Left colon (tissue), 2 donors: ENCODE measurements at regions of chr1 and their contacts with region 1.

Region 1: DNA sequence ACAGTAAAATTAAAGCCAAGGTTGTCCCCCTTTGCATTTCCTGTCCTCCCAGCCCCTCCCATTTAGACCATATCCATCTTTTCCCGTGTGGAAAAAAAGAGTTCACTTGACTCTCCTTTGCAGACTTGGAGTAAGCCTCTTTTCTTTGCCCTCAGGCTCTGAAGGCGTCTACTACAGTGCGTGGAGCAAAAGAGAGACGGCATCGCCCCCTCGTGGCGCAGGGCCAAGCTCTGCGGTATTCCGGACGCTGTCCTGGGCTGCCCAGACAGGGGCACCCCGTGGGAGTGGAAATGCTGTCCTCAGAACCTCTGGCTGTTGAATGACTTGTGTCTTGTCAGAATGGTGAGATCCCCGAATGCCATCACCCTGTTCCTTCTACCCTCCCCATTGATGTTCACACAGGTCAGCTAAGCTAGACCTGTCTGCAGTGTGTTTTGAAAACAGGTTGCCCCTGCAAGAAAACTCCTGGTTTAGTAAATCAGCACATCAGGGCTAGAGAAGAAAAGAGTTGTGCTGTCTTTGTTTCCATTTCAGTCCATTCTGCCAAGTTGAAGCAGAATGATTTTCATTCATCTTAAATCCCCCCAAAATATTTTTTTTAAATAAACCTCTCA is 12.3 kb upstream of the GJA8 start:
- DNase-seq: peak in 1 of 2 donors; percentile 67
- ATAC-seq: peak; percentile 83

Region 2: DNA sequence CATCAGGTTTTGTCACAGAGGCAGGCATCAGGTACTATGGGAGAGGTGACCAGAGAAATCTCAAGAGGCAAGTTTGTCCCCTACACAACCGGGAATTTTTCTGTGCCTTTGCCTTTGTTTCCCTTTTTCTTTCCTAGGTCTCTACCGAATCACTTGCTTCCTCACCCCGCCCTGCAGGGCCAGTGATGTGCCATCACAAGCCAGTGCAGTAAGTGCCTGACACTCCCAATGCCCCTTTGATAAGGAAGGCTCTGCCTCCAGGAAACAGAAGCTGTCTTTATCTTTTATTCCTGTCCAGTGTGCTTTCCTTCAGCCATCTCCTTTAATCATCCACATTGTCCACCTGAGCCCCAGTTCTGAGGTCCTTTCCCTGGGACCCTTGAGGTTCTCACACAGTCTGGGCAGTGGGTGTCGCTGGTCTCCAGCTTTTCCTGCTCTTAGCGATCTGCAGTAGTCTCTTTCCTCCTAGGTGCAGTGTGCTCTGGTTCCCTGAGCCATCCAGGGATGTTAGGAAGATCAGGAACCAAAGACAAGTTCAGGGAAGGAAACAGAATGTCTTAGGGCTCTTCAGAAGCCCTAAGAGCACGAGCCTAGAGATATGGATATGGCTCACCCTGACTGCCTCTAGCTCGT is 166.5 kb before region 1 on chr1:
- intact Hi-C with region 1: loop called in 1 of 2 experiments (anchors 10 kb)
- DNase-seq: peak in 1 of 2 donors; percentile 13
- ATAC-seq: peak; percentile 69

Region 3: DNA sequence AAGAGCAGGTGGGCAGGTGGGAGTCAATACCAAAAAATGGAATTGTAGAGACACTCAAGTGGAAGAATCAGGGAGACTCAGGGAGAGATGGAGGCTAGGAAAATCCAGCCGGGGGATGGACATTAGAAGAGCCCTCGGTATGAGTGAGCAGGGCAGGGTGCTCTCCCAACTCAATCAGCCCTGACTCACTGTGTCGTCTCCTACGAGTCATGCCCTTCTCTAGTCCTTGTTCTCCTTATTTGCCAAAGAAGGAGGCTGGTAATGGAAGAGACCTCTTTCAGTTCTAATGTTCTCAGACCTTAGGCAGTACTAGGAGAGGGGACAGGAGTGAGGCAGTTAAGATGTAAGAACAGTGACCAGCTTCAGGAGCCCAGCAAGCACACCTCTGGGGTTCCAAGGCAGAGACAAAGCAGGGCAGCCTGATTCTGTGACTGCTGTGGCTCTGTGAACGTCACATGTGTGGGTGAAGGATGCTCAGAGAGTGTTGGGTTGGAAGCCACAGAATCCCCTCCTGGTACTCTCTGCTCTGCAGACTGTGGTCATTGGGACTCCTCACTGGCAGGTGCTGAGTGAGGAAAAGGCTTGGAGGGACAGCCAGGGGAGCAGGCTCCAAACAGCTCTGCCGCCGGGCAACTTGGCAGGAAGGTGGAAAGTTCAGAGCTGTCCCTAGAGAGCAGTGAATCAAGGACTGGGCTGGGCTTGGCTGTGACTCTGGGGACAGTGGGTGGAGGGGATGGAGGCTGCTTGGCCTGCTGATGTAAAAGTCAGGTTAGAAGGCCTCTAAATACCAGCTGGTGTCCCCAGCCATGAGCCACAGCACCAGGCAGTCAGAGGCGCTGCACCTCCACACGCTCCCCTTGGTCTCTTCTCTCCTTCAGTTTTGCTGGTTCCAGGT is 118.8 kb before region 1 on chr1:
- intact Hi-C with region 1: no loop called
- DNase-seq: no peak
- ATAC-seq: no peak